GM10248 (cell line): ENCODE measurements at regions of chr11 and their contacts with region 1.

Region 1: GRCh38 chr11:46560300-46560991 is 33.4 kb downstream of the AMBRA1 start:
- DNase-seq: peak; percentile 47
- CTCF ChIP-seq: no peak

Region 2: DNA sequence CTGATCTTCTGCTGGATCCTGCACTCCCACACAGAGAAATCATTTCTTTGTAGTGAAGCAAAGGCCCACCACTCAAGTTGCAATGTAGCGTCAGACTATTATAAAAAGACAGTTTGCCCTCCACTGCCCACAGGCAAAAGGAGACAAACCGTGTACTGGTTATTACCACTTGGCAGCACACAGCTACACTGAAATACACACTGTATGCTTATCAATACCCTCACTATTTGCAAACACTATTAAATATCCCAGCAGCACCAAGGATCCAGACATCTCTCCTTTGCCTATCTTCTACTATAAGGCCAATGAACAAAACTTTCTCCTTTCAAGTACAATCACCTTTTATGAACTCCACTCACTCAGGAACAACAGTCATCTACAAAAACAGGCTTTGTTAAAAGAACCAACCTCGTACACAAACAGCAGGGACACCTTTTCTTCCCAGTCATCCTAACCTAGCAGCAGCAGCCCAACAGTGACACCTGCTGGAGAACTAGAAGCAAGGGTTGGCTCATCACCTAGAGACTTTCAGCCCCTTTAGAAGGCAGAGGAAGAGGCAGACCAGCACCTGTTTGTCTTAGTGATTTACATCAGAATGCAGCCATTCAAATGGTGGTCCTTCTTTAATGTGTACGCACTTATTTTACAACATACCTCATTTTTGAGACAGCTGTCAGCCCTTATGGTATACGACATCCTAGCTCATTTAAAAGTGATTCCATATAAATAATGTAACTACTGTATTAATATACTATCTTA is 22.7 kb before region 1 on chr11:
- CTCF ChIA-PET with region 1: interaction called, 12 read pairs
- POLR2A ChIA-PET with region 1: no interaction called
- DNase-seq: peak; percentile 75
- CTCF ChIP-seq: peak; percentile 82

Region 3: GRCh38 chr11:46616998-46617675 is 56.7 kb after region 1 on chr11 and contains the starts of genes ATG13 and HARBI1:
- CTCF ChIA-PET with region 1: interaction called, 11 read pairs
- POLR2A ChIA-PET with region 1: no interaction called
- DNase-seq: peak; percentile 93
- CTCF ChIP-seq: no peak

Region 4: DNA sequence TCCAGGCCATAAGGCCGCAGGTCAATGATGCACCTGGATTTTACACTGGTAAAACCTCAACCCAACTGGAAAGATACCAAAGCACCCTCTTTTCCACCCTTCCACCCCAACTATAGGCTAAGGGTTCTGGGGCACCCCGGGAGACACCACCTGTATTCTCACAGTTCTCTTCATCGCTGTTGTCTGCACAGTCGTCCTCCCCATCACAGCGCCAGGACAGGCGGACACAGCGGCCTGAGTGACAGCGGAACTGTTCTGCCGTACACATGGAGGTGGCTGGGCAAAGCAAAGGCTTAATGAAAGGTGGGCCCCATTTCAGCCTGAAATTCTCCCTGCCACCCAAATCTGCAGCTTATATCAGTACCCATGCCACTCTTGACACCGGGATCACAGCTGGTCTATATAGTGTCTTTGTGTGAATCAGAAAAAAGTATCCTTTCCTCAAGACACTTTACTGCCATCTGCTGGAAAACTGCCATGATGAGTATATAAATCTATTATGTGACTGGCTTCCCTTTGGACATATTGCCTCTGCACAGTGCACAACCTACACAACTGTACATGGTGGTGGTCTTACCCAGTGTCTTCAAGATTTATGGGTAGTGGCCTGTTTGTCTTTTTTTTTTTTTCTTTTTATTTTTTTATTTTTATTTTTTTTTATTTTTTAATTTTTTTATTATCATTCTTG is 336.4 kb after region 1 on chr11:
- CTCF ChIA-PET with region 1: no interaction called
- POLR2A ChIA-PET with region 1: no interaction called
- DNase-seq: peak; percentile 44
- CTCF ChIP-seq: peak; percentile 9